ENCODE measurements at regions of chr16 and their contacts with region 1.

Region 1: GRCh38 chr16:20900299-20901067 is at the starts of genes DCUN1D3 and LYRM1:
- DNase-seq: peak; percentile 92
- ATAC-seq: peak; percentile 93
- H3K4me3 ChIP-seq: peak within 1 kb of the TSS; percentile 82 to 91
- H3K27ac ChIP-seq: peak within 1 kb of the TSS; percentile 98
- H3K4me1 ChIP-seq: peaks cover 55% of the 10 kb centered on the region
- H3K27me3 ChIP-seq: no peaks in the 10 kb centered on the region
- CTCF ChIP-seq: no peak
- total RNA-seq, gene DCUN1D3: 23.5 TPM
- total RNA-seq, gene LYRM1: 30.7 TPM

Region 2: GRCh38 chr16:20763461-20764232 is 136.8 kb before region 1 on chr16 and contains the start of gene ACSM3:
- CTCF ChIA-PET with region 1: no interaction called
- POLR2A ChIA-PET with region 1: interaction called, 16 read pairs
- in situ Hi-C with region 1: no loop called
- intact Hi-C with region 1: no loop called
- DNase-seq: no peak
- ATAC-seq: peak; percentile 72
- H3K4me3 ChIP-seq: peak within 1 kb of the TSS; percentile 17 to 40; a peak in 3 of 4 replicates
- H3K27ac ChIP-seq: no peak within 1 kb of the TSS
- H3K4me1 ChIP-seq: no peaks in the 10 kb centered on the region
- H3K27me3 ChIP-seq: peaks cover 7% of the 10 kb centered on the region; the same call in 1 of the 2 replicates
- CTCF ChIP-seq: no peak
- total RNA-seq, gene ACSM3: 0.44 TPM

Measured in Panc1 (cell line).